ENCODE measurements at regions of chr1 and their contacts with region 1.

Region 1: DNA sequence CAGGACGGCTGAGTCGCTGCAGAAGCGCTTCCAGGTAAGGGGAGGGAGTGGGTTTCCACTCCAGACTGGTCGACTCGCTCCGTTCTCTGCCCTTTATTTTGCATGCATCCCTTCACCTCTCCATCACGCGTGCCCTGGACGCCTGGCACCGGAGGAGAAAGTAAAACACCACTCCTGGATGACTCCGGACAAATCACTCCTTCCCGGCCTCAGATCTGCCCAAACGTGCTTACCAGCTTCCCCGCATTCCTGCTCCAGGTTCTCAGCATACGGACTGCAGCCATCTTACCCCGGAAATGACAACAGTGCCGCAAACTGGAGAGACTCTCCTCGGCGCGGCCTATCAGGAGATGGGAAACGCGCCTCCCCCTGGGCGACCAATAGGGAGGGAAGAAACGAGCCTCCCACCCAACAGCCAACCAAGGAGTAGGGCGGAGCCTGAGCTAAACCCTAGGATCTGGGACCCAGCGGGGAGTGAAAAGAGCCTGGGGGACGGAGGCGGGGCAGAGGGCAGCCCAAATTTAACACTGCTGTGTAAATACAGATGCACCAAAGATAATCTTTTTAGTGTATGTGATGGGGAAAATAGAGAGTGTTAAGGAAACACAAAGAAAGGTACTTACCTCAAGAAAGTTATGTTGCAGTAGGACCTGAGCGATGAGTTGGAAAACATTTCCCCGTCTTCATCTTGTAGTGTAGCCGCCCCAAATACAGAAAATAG is at the start of gene DBT:
- DNase-seq: peak; percentile 84
- ATAC-seq: peak; percentile 100
- H3K4me3 ChIP-seq: peak within 1 kb of the TSS; percentile 94
- H3K27ac ChIP-seq: peak within 1 kb of the TSS; percentile 79
- H3K4me1 ChIP-seq: peaks cover 3% of the 10 kb centered on the region; the same call in 1 of the 2 replicates
- H3K27me3 ChIP-seq: no peaks in the 10 kb centered on the region
- CTCF ChIP-seq: no peak
- EP300 ChIP-seq: no peak
- POLR2A ChIP-seq: peak; percentile 99
- RAD21 ChIP-seq: no peak
- polyA plus RNA-seq, gene DBT: 2.1 to 3.0 TPM

Region 2: DNA sequence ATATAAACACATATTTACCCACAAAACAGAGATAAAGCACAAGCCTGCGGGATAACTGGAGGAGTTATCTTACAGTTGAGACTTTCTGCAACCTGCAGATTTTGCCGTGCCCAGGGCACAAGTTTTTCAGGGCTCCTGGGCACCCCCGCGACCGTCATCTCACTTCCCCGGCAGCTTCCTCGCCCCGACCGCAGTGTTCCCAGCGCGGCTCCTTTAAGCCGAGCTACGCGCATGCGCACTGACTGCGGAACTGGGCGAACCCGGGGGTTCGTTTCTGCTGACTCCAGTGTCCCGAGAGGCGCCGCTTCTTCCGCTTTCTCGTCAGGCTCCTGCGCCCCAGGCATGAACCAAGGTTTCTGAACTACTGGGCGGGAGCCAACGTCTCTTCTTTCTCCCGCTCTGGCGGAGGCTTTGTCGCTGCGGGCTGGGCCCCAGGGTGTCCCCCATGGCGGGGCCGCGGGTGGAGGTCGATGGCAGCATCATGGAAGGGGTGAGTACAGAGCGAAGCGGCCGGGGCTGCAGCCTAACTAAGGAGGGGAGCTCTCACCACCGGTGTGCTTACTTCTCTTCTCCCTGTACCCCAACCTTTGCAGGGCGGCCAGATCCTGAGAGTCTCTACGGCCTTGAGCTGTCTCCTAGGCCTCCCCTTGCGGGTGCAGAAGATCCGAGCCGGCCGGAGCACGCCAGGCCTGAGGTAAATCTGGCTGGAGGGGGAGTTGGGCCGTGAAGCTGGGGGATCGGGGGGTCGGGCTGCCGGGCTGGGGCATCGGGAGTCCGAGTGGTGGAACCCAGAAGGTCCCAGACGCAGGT is 16.4 kb after region 1 on chr1 and contains the start of gene RTCA:
- CTCF ChIA-PET with region 1: interaction called, 14 read pairs
- POLR2A ChIA-PET with region 1: interaction called, 24 read pairs
- RAD21 ChIA-PET with region 1: interaction called, 14 read pairs
- SMC1A ChIA-PET with region 1: interaction called, 32 read pairs
- in situ Hi-C with region 1: no loop called
- intact Hi-C with region 1: no loop called
- DNase-seq: peak; percentile 74
- ATAC-seq: peak; percentile 96
- H3K4me3 ChIP-seq: peak within 1 kb of the TSS; percentile 100
- H3K27ac ChIP-seq: peak within 1 kb of the TSS; percentile 73
- H3K4me1 ChIP-seq: peaks cover 2% of the 10 kb centered on the region; the same call in 1 of the 2 replicates
- H3K27me3 ChIP-seq: no peaks in the 10 kb centered on the region
- CTCF ChIP-seq: no peak
- EP300 ChIP-seq: no peak
- POLR2A ChIP-seq: peak; percentile 83; the same call in 1 of the 2 replicates
- RAD21 ChIP-seq: no peak
- polyA plus RNA-seq, gene RTCA: 10.3 to 23.6 TPM

Region 3: DNA sequence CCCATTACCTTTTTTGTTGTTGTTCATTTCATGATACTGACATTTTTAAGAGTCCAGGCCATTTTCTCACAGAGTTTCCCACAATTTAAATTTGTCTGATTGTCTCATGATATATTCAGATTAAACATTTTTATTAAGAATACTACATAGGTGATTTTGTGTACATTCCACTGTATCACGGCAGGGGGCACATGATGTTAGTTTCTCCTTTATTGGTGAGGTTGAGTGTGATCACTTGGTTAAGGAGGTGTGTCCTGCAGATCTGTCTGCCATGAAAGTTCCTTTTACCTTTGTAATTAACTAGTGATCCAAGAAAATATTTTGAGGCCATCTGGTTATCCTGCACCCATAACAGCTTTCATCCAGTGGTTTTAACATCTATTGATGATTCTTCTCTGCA is 28.2 kb after region 1 on chr1:
- CTCF ChIA-PET with region 1: no interaction called
- POLR2A ChIA-PET with region 1: no interaction called
- RAD21 ChIA-PET with region 1: no interaction called
- SMC1A ChIA-PET with region 1: no interaction called
- in situ Hi-C with region 1: no loop called
- intact Hi-C with region 1: no loop called
- DNase-seq: no peak
- ATAC-seq: peak; percentile 88
- H3K4me3 ChIP-seq: no peak overlapping the region
- H3K27ac ChIP-seq: no peak overlapping the region
- H3K4me1 ChIP-seq: no peaks in the 10 kb centered on the region
- H3K27me3 ChIP-seq: no peaks in the 10 kb centered on the region
- CTCF ChIP-seq: peak; percentile 25 to 28 (median 26); a peak in 2 of 6 replicates
- EP300 ChIP-seq: no peak
- POLR2A ChIP-seq: no peak
- RAD21 ChIP-seq: peak; percentile 46